Activated CD8-positive, alpha-beta T cell treated with anti-CD3 and anti-CD28 coated beads, Interleukin-2, amount 10 ng/mL, durations not matched to agents 7 days and 5 days (primary cell): ENCODE measurements at regions of chr1 and their contacts with region 1.

Region 1: DNA sequence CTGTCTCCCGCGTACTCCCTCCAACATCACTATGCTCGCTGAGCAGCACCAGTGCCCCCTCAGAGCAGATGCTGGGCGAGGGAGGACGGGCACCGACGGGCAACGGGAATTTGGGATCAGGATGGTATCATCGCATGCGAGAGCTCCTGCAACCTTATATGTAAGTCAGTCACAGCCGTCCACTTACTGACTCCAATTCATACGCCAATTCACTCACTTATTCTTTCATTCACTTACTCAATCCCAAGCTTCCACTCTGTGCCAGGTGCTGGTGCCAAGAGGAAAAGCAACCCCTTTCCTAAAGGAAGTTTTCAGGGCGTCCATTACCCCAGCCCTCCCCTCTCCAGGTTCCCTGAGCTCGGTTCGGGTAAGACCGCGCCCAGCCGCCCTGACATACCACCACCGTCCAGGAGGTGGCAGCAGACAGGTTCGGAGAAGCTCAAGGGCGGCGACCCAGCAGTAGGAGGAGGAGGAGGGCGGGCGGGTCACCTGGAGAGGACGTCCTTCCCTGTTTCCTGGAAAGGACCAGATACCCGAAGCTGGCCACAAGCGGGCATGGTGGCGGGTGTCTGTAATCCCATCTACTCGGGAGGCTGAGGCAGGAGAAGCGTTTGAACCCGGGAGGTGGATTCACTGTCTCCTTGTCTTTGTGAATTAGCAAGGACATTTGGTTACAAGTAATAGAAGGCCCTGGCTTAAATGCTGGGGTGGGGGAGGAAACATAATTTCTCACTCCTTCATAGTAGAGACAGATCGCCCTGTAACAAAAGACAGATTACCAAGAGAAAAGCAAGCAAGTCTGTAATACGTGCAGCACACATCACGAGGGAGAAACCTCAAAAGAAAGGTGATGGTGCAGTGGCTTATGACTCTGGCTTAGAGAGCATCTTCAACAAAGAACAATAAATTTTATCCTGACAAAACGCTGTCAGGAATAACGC is 7.6 kb upstream of the IL22RA1 start:
- DNase-seq: peak; percentile 91
- ATAC-seq: peak; percentile 99
- H3K4me3 Mint-ChIP-seq: peak overlapping the region; percentile 44
- H3K27ac Mint-ChIP-seq: no peak overlapping the region
- H3K4me1 Mint-ChIP-seq: peaks cover 15% of the 10 kb centered on the region
- H3K27me3 Mint-ChIP-seq: peaks cover 35% of the 10 kb centered on the region

Region 2: DNA sequence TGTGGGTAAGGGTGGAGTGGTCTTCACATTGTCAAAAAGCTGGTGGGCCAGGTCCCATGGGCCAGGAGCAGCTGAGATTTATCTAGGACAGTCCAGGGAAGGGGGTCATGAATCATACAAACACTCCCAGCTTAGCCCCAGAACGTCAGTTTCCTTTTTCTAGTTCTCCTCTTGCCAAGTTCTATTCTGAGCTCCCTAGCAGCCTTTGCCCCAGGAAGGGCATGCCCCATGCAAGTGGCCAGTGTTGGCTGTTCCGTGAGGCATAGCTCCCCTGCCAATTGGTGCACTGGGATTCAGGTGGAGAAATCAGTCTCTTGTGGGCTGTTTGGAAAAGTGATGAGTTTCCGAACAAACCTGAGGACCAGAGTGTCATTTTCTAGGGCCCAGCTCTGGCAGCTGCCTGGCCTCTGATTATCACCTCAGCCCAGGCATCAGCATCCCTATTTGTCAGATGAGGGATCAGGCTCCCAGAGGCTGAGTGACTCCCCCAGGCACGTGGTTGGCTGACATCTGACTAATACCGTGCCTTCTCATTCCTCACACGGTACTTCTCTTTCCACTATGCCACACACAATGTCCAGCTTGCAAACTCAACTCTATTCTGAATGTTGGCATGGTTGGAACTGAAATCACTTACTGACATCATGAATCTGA is 24.4 kb before region 1 on chr1:
- CTCF ChIA-PET with region 1: interaction called, 12 read pairs
- POLR2A ChIA-PET with region 1: interaction called, 3 read pairs
- DNase-seq: no peak
- ATAC-seq: no peak
- H3K4me3 Mint-ChIP-seq: no peak overlapping the region
- H3K27ac Mint-ChIP-seq: no peak overlapping the region
- H3K4me1 Mint-ChIP-seq: no peaks in the 10 kb centered on the region
- H3K27me3 Mint-ChIP-seq: peaks cover 7% of the 10 kb centered on the region

Region 3: DNA sequence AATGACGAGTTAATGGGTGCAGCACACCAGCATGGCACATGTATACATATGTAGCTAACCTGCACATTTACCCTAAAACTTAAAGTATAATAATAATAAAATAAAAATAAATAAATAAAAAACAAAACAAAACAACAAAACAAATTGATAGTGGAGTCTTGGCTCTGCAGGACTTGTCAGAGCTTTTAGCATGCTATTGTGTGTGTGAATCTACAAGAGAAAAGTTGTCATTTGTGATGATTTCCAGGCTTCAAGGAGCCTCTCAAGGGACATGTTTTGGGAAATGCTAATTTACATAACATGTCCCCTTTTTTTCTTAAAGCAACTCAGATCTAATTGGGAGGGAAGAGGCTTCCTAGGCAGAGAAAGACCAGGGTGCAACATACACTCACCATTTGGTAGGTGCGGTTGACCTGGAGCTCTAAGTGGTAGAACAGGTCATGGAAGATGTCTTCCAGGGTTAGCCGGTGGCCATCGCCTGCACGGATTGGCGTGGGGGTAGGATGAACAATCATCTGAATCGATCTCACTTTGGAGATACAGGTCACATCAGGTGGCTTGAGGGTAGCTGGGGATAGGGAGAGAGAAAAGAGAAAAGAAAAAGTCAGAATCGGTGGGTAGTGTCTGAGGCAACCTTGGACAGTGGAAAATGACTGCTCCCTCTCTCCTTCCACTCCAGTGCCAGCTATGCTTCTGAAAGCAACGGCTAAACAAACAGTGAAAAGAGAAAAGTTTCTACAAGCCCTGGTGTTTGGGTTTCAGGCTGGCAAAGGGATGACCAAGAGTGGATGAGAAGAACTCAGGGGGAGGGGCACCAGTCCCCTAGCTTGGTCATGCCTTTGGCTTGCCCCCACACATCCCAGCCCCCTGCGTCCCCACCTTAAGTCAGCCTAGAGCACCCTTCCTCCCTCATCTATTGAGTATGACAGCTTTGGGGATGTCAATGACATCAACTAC is 16.4 kb before region 1 on chr1:
- CTCF ChIA-PET with region 1: interaction called, 13 read pairs
- POLR2A ChIA-PET with region 1: no interaction called
- DNase-seq: no peak
- ATAC-seq: no peak
- H3K4me3 Mint-ChIP-seq: no peak overlapping the region
- H3K27ac Mint-ChIP-seq: no peak overlapping the region
- H3K4me1 Mint-ChIP-seq: peaks cover 4% of the 10 kb centered on the region
- H3K27me3 Mint-ChIP-seq: peaks cover 27% of the 10 kb centered on the region

Region 4: GRCh38 chr1:24181619-24182018 is 31.1 kb after region 1 on chr1:
- CTCF ChIA-PET with region 1: interaction called, 19 read pairs
- POLR2A ChIA-PET with region 1: no interaction called
- DNase-seq: no peak
- ATAC-seq: no peak
- H3K4me3 Mint-ChIP-seq: no peak overlapping the region
- H3K27ac Mint-ChIP-seq: no peak overlapping the region
- H3K4me1 Mint-ChIP-seq: peaks cover 5% of the 10 kb centered on the region
- H3K27me3 Mint-ChIP-seq: no peaks in the 10 kb centered on the region

Region 5: GRCh38 chr1:24186993-24187805 is 36.7 kb after region 1 on chr1 and contains the start of gene IFNLR1:
- CTCF ChIA-PET with region 1: interaction called, 29 read pairs
- POLR2A ChIA-PET with region 1: interaction called, 3 read pairs
- DNase-seq: peak; percentile 75
- ATAC-seq: peak; percentile 89
- H3K4me3 Mint-ChIP-seq: peak within 1 kb of the TSS; percentile 76
- H3K27ac Mint-ChIP-seq: peak within 1 kb of the TSS; percentile 61
- H3K4me1 Mint-ChIP-seq: peaks cover 50% of the 10 kb centered on the region
- H3K27me3 Mint-ChIP-seq: no peaks in the 10 kb centered on the region
- total RNA-seq, gene IFNLR1: 2.6 to 4.0 TPM

Region 6: DNA sequence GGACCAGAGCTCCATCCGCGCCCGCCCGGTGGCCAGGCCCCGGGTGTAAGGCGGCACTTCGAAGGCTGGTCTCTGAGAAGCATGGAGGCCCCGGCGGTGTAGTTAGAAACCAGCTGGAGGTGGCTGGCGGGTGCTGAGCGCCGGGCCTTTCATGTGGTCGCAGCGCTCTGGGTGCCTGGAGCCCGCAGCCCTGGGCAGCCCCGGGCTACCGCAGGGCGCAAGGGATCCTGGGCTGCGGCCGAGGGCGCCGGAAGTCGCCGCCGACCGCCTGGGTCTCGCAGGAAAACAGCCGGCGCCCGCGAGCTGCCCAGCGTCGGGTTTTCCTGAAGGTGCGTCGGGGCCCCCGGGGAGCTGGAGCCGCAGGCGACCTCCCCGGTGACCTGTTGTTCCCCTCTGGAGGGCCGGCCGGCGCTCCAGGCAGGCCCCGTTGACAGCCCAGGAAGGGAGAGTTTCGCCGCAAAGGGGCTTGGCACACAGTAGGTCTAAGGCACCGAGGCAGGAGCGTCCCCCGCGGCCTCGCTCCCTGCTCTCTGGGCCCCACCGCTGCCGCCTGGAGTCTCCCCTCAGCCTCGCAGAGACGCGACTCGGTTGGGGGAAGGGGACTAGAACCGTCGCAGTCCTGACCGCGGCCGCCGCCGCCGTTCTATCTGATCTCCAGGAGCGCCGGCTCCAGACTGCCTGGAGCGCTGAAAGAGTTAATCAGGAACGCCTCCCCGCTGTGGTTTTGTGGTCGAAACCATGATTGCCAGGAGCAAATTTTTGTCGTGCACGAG is 171.4 kb after region 1 on chr1:
- CTCF ChIA-PET with region 1: interaction called, 10 read pairs
- POLR2A ChIA-PET with region 1: no interaction called
- DNase-seq: peak; percentile 79
- ATAC-seq: peak; percentile 81
- H3K4me3 Mint-ChIP-seq: peak overlapping the region; percentile 62
- H3K27ac Mint-ChIP-seq: peak overlapping the region; percentile 68
- H3K4me1 Mint-ChIP-seq: peaks cover 42% of the 10 kb centered on the region
- H3K27me3 Mint-ChIP-seq: peaks cover 88% of the 10 kb centered on the region

Region 7: DNA sequence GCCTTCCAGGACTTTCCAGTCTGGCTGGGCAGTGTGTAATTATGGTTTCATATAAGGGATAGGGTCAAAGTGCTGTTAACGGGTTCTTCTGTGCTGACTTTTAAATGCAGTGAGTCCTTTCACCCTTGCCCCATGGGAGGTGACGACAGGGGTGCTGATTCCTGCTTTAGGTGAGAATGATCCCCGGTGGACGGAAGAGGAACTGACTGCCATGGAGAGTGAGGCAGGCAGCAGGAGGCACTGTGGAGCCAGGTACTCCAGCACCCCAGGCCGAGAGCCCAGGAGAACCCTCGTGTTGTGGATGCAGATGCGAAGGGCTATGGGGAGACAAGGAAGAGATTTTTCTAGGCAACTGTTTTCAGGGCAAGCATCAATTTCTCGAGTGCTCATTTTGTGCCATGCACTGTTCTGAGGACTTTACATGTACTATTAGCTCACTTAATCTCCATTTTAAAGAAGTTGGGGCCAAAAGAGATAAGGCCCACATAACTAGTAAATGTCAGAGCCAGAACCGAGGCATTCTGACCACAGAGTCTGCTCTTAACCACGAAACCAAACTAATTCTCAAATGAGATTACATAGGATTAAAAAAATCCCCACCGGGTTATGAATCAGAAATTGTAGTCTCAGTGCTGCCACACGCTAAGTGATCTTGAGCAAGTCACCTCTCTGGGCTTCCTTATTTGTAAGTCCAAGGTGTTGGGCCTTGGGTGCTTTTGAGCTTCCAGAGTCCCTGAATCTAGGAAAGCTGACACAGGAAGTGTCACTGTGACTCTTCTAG is 234.8 kb after region 1 on chr1:
- CTCF ChIA-PET with region 1: interaction called, 101 read pairs
- POLR2A ChIA-PET with region 1: no interaction called
- DNase-seq: peak; percentile 46
- ATAC-seq: peak; percentile 59
- H3K4me3 Mint-ChIP-seq: no peak overlapping the region
- H3K27ac Mint-ChIP-seq: peak overlapping the region; percentile 26
- H3K4me1 Mint-ChIP-seq: peaks cover 27% of the 10 kb centered on the region
- H3K27me3 Mint-ChIP-seq: no peaks in the 10 kb centered on the region